ENCODE measurements at regions of chr7 and their contacts with region 1.

Region 1: DNA sequence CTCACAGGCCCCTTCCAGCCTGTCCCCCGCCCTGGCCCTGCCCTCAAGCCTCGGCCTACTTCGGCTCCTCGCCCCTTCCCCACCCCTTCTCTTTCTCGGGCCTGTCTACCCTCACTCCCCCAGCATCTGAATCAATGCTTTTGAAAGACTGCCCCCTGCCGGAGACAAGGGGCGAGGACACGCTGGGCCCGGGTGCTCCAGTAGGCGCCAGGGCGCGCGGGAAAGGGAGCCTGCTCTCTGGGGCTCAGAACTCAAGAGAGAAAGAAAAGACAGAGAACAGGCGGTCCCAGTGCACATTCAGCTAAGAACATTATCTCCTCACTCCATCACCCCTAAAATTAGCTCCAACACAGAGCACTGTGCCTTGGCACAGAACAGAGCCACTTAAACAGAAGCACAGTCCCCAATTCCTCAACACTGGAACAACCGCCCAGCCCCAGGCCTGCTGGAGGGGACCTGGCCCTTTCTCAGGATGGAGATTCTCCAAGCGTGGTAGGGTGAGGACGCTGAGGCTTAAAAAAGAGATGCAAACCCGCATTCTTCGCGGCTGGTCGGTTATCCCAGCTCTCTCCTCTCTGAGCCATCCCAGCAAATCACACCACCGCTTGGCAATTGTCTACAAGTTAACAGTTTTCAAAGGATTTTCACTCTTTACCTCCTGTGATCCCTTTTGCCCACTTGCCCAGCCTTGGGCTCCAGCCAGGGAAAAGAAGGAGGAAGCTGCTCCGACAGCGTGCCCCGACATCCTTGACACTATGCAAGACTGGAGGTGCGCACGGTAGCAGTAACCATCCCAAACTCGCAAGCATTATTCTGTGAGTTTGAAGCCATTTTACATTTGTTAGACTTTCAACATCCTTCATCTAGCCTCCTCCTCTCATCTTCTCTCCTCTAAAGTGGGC is 2.1 kb downstream of the GIGYF1 start:
- DNase-seq: peak; percentile 69 to 85 (median 71)
- H3K4me3 ChIP-seq: peak overlapping the region; percentile 81
- H3K4me3 Mint-ChIP-seq: peak overlapping the region; percentile 88 to 97 (median 94)
- H3K27ac ChIP-seq: no peak overlapping the region
- H3K27ac Mint-ChIP-seq: peak overlapping the region; percentile 15 to 95 (median 86)
- H3K4me1 ChIP-seq: peaks cover 26% of the 10 kb centered on the region
- H3K4me1 Mint-ChIP-seq: peaks cover 36 to 49% (median 39%) of the 10 kb centered on the region in 3 donors
- H3K27me3 ChIP-seq: no peaks in the 10 kb centered on the region
- H3K27me3 Mint-ChIP-seq: no peaks in the 10 kb centered on the region

Region 2: GRCh38 chr7:100611974-100612729 is 79.8 kb before region 1 on chr7 and contains the start of gene MOSPD3:
- CTCF ChIA-PET with region 1: interaction called, 21 read pairs
- POLR2A ChIA-PET with region 1: interaction called, 10 read pairs
- DNase-seq: peak; percentile 96 to 98 (median 98)
- H3K4me3 ChIP-seq: peak within 1 kb of the TSS; percentile 99
- H3K4me3 Mint-ChIP-seq: peak within 1 kb of the TSS; percentile 91 to 100 (median 99)
- H3K27ac ChIP-seq: peak within 1 kb of the TSS; percentile 99
- H3K27ac Mint-ChIP-seq: peak within 1 kb of the TSS; percentile 94 to 100 (median 100)
- H3K4me1 ChIP-seq: peaks cover 19% of the 10 kb centered on the region
- H3K4me1 Mint-ChIP-seq: peaks cover 20 to 24% (median 23%) of the 10 kb centered on the region in 3 donors
- H3K27me3 ChIP-seq: no peaks in the 10 kb centered on the region
- H3K27me3 Mint-ChIP-seq: no peaks in the 10 kb centered on the region
- total RNA-seq, gene MOSPD3: 16.2 to 16.3 TPM

Region 3: GRCh38 chr7:100632951-100633717 is 58.8 kb before region 1 on chr7:
- CTCF ChIA-PET with region 1: interaction called, 41 read pairs
- POLR2A ChIA-PET with region 1: interaction called, 4 read pairs
- DNase-seq: peak; percentile 34 to 75 (median 50)
- H3K4me3 ChIP-seq: peak overlapping the region; percentile 66
- H3K4me3 Mint-ChIP-seq: peak overlapping the region; percentile 83 to 94 (median 85)
- H3K27ac ChIP-seq: no peak overlapping the region
- H3K27ac Mint-ChIP-seq: peak overlapping the region; percentile 41 to 90 (median 82)
- H3K4me1 ChIP-seq: peaks cover 6% of the 10 kb centered on the region
- H3K4me1 Mint-ChIP-seq: peaks cover 14 to 29% (median 25%) of the 10 kb centered on the region in 3 donors
- H3K27me3 ChIP-seq: no peaks in the 10 kb centered on the region
- H3K27me3 Mint-ChIP-seq: peaks cover 2 to 3% of the 10 kb centered on the region in 2 donors

Region 4: GRCh38 chr7:100673300-100673941 is 18.5 kb before region 1 on chr7 and contains the start of gene GNB2:
- CTCF ChIA-PET with region 1: interaction called, 91 read pairs
- POLR2A ChIA-PET with region 1: interaction called, 5 read pairs
- DNase-seq: peak; percentile 93 to 98 (median 96)
- H3K4me3 ChIP-seq: peak within 1 kb of the TSS; percentile 84
- H3K4me3 Mint-ChIP-seq: peak within 1 kb of the TSS; percentile 92 to 98 (median 95)
- H3K27ac ChIP-seq: peak within 1 kb of the TSS; percentile 89
- H3K27ac Mint-ChIP-seq: peak within 1 kb of the TSS; percentile 95 to 98 (median 96)
- H3K4me1 ChIP-seq: peaks cover 15% of the 10 kb centered on the region
- H3K4me1 Mint-ChIP-seq: peaks cover 10 to 23% (median 12%) of the 10 kb centered on the region in 3 donors
- H3K27me3 ChIP-seq: no peaks in the 10 kb centered on the region
- H3K27me3 Mint-ChIP-seq: peaks cover 0 to 6% of the 10 kb centered on the region in 2 donors
- total RNA-seq, gene GNB2: 253 to 262 TPM

Region 5: DNA sequence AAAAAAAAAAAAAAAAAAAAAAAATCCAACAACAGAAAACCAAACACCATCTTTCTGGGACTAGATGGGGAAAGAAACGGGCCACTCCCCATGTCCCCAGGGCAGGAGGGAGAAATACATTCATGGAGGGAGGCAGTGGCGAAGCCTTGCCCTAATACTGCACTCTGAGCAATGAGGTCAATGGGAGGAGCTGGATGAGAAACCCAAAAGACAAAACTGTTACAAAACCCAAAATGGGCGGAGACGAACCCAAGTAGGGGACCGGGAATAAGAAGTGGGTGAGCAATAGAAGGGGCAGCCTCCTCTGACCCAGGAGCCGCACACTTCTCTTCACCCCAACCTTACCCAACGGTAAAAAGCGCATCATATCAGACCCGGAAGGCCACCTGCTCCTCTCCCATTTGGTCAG is 11.8 kb before region 1 on chr7:
- CTCF ChIA-PET with region 1: interaction called, 91 read pairs
- POLR2A ChIA-PET with region 1: interaction called, 10 read pairs
- DNase-seq: no peak
- H3K4me3 ChIP-seq: no peak overlapping the region
- H3K4me3 Mint-ChIP-seq: peak overlapping the region in 1 of 7 donors; percentile 70
- H3K27ac ChIP-seq: no peak overlapping the region
- H3K27ac Mint-ChIP-seq: peak overlapping the region; percentile 8 to 94 (median 51)
- H3K4me1 ChIP-seq: peaks cover 24% of the 10 kb centered on the region
- H3K4me1 Mint-ChIP-seq: peaks cover 29 to 46% (median 33%) of the 10 kb centered on the region in 3 donors
- H3K27me3 ChIP-seq: no peaks in the 10 kb centered on the region
- H3K27me3 Mint-ChIP-seq: peaks cover 0 to 2% of the 10 kb centered on the region in 2 donors

Region 6: DNA sequence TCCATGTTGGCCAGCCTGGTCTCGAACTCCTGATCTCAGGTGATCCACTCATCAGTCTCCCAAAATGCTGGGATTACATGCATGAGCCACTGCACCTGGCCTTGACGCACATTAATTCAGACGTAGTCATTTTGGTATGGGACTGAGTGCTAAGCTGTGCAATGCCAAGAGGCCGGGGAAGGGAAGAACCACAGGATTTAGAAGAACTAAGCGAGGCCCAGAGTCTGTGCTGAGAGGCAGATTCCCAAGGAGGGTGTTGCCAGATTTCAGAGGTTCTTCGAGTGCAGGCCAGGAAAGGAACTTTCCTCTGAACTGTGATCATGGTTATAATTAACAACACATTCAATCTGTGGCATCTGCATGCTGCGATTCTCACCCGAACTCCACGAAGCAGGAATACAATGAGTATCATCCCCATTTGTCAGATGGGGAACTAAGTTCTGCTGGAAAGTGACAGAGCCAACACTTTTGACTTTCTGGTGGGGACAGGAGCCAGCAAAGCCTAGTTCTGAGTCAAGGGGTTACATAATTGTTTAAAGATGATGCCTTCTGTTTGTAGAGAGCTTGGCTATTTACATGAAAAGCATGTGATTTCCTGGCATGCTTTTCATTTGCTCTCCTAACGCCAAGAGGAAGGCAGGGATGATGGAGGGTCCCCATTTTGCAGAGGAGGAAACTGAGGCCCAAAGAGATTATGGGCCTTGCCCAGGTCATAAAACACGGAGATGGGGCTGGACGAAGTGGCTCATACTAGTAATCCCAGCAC is 35.3 kb after region 1 on chr7:
- CTCF ChIA-PET with region 1: interaction called, 19 read pairs
- POLR2A ChIA-PET with region 1: no interaction called
- DNase-seq: peak in 1 of 5 donors; percentile 15
- H3K4me3 ChIP-seq: no peak overlapping the region
- H3K4me3 Mint-ChIP-seq: no peak overlapping the region
- H3K27ac ChIP-seq: no peak overlapping the region
- H3K27ac Mint-ChIP-seq: peak overlapping the region in 1 of 8 donors; percentile 60
- H3K4me1 ChIP-seq: peaks cover 5% of the 10 kb centered on the region
- H3K4me1 Mint-ChIP-seq: peaks cover 3 to 5% (median 3%) of the 10 kb centered on the region in 3 donors
- H3K27me3 ChIP-seq: peaks cover 6% of the 10 kb centered on the region
- H3K27me3 Mint-ChIP-seq: peaks cover 21 to 32% of the 10 kb centered on the region in 2 donors